Cardiac septum (tissue), 1 donor: ENCODE measurements at regions of chr11 and their contacts with region 1.

Region 1: DNA sequence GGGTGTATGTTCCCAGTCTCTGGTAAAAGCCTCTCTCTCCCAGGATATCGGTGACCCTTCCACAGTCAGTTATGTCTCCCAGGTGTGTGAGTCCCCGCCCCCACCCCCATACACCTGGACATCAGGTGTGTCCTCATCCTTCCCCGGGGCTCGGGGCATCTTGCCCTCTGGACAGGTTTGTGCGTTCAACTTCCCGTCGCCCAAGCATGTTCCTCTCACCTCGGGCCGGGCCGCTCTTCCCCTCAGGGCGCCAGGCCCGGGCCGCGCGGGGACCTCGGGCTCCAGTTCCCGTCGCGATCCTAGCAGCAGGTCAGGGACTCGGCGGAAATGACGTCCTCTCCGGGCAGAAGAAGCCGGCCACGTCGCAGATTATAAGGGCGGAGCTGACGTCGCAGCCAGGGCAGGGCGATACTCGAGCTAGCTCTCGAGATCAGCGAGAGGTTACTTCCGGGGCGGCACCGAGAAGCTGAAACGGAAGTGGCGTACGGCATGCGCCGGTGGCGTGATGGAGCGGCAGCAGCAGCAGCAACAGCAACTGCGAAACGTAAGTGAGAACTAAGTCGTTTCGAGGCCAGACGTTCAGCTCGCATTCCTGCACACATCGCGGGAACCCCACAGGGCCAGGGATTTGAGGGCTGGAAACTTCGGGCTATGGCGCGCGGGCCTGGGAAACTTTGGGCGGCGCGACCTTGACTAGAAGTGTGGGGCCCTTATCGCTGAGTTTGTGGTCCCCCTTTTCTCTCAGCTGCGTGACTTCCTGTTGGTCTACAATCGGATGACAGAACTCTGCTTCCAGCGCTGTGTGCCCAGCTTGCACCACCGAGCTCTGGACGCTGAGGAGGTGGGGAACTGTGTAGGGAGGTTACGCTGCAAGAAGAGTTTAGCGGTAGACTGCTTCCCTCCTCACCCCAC is at the starts of genes ARFIP2 and TIMM10B:
- DNase-seq: peak; percentile 100
- total RNA-seq, gene ARFIP2: 20.1 TPM
- total RNA-seq, gene TIMM10B: 21.7 TPM

Region 2: GRCh38 chr11:6603287-6604080 is 122.2 kb after region 1 on chr11 and contains the starts of genes ILK and RRP8:
- intact Hi-C with region 1: loop called (anchors 5 kb)
- DNase-seq: peak; percentile 98
- total RNA-seq, gene ILK: 229 TPM
- total RNA-seq, gene RRP8: 21.3 TPM